Common myeloid progenitor, CD34-positive (primary cell): ENCODE measurements at regions of chr6 and their contacts with region 1.

Region 1: DNA sequence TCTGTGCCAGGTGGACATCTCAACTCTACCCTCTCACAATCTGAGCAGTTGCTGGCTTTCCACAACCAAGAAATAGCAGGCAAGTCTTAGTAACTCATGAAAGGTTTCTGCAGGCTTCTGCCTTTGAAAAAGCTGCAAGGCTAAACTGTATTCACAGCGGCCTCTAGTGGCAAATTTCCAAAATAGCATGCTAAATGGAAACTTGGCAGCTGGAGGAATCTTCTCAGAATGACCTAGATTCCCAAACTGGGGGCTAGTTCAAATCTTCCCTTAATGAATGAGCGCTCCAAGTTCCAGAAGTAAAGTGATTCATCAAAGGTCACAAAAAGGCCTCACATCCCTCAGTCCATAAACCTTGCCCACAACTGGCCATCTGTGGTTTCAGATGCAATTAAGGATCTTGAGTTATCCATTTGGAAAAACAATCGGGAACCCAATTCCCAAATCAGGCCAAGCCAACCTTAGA is 11.9 kb upstream of the CPNE5 start:
- DNase-seq: peak; percentile 72 to 83 (median 76)
- H3K4me3 ChIP-seq: no peak overlapping the region
- H3K27ac ChIP-seq: no peak overlapping the region
- H3K4me1 ChIP-seq: peaks cover 12 to 50% (median 21%) of the 10 kb centered on the region in 4 experiments
- H3K27me3 ChIP-seq: peaks cover 0 to 3% (median 0%) of the 10 kb centered on the region in 5 experiments

Region 2: GRCh38 chr6:36638579-36638978 is 212.6 kb before region 1 on chr6:
- CTCF ChIA-PET with region 1: no interaction called
- POLR2A ChIA-PET with region 1: no interaction called
- DNase-seq: no peak
- H3K4me3 ChIP-seq: no peak overlapping the region
- H3K27ac ChIP-seq: no peak overlapping the region
- H3K4me1 ChIP-seq: peaks cover 0 to 17% (median 9%) of the 10 kb centered on the region in 4 experiments
- H3K27me3 ChIP-seq: no peaks in the 10 kb centered on the region

Region 3: GRCh38 chr6:36759148-36759759 is 91.9 kb before region 1 on chr6:
- CTCF ChIA-PET with region 1: interaction called, 189 read pairs
- POLR2A ChIA-PET with region 1: interaction called, 3 read pairs
- DNase-seq: peak; percentile 67 to 82 (median 77)
- H3K4me3 ChIP-seq: no peak overlapping the region
- H3K27ac ChIP-seq: no peak overlapping the region
- H3K4me1 ChIP-seq: peaks cover 0 to 24% (median under 1%) of the 10 kb centered on the region in 4 experiments
- H3K27me3 ChIP-seq: no peaks in the 10 kb centered on the region

Region 4: GRCh38 chr6:36772397-36772796 is 78.8 kb before region 1 on chr6:
- CTCF ChIA-PET with region 1: interaction called, 189 read pairs
- POLR2A ChIA-PET with region 1: no interaction called
- DNase-seq: peak in 1 of 3 donors; percentile 20
- H3K4me3 ChIP-seq: no peak overlapping the region
- H3K27ac ChIP-seq: no peak overlapping the region
- H3K4me1 ChIP-seq: peaks cover 5 to 40% (median 19%) of the 10 kb centered on the region in 4 experiments
- H3K27me3 ChIP-seq: peaks cover 0 to 5% (median 0%) of the 10 kb centered on the region in 5 experiments

Region 5: DNA sequence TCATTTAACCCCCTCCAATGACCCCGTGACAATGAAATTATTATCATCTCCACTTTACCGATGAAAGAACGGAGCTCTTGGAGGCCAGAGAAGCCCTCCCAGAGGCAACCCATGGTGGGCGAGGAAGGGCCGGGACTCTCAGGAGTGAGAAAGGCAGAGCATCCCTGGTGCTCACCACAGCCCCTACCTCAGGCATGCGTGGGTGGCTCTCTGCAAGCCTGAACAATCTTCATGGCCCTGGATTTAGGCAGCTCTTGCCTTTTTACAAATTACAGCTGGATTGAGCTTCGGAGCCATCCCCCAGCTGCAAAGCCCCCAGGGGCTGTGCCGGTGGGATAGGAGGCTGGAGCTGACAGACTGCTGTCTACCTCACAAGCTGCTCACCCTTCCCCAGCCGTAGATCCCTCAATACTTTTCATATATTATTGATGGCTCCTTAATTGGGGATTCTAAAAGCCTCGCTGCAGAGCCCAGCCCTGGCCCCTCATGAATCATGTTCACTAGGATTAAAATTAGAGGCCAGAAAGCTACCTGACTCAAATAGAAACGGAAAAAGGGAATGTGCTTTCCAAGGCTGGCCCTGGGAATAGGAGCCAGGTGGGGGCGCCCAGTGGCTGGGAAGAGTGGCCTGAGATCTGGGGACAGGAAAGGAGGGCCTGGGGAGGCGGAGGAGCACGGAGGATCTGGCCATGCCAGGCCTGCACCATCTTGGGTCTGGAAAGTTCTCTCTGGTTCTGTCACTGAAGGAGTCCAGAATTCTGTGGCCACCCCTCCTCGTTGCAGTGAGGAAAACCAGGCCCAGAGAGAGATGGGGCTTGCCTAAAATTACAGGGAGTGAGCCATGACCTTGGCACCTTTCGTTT is 41.0 kb before region 1 on chr6:
- CTCF ChIA-PET with region 1: interaction called, 15 read pairs
- POLR2A ChIA-PET with region 1: no interaction called
- DNase-seq: no peak
- H3K4me3 ChIP-seq: no peak overlapping the region
- H3K27ac ChIP-seq: no peak overlapping the region
- H3K4me1 ChIP-seq: no peaks in the 10 kb centered on the region
- H3K27me3 ChIP-seq: no peaks in the 10 kb centered on the region

Region 6: DNA sequence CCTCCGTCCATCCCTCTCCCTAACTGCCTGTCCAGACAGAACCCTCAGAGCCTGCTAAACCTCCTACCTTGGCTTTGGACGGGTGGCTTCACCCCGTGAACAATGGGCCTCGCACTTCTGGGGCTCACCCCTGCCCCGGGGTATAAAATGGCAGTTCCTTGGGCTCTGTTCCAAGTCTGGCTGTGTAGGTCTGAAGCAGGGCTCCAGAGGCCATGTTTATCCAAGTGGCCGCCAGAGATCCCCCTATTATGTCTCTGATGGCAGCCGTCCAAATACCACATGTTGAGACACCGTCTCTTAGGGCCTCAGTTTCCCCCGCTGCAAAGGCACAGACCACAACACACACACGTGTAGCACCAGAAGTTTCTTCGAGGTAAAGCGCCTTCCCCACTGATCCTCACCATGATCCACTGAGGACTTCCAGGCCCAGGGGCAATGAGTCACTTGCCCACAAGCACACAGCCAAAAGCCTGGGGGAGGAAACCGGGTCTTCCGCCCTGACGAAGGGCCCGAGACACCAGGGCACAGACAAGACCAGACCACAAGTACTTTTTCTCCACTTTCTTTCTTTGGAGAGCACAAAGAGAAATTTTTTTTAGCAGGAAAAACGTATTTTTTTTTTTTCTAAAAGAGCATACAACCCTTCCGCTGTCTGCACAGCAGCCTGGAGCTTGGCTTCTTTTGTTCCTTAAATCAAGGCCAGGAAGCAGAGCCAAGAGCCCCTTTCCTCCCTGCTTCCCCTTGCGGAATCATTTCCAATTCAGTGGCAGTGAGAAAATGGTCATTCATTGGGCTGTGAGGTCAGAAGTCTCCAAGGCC is 23.7 kb before region 1 on chr6:
- CTCF ChIA-PET with region 1: interaction called, 128 read pairs
- POLR2A ChIA-PET with region 1: no interaction called
- DNase-seq: peak; percentile 90 to 96 (median 94)
- H3K4me3 ChIP-seq: peak overlapping the region in 3 of 7 experiments; percentile 7 to 26 (median 17)
- H3K27ac ChIP-seq: no peak overlapping the region
- H3K4me1 ChIP-seq: peaks cover 2 to 30% (median 24%) of the 10 kb centered on the region in 4 experiments
- H3K27me3 ChIP-seq: peaks cover 0 to 2% (median 0%) of the 10 kb centered on the region in 5 experiments

Region 7: GRCh38 chr6:36874443-36875249 is 23.5 kb after region 1 on chr6 and contains the start of gene PPIL1:
- CTCF ChIA-PET with region 1: interaction called, 60 read pairs
- POLR2A ChIA-PET with region 1: no interaction called
- DNase-seq: peak; percentile 92 to 96 (median 94)
- H3K4me3 ChIP-seq: peak within 1 kb of the TSS; percentile 84 to 99 (median 95)
- H3K27ac ChIP-seq: peak within 1 kb of the TSS; percentile 97 to 99
- H3K4me1 ChIP-seq: peaks cover 10 to 26% (median 14%) of the 10 kb centered on the region in 4 experiments
- H3K27me3 ChIP-seq: no peaks in the 10 kb centered on the region